B cell (primary cell): ENCODE measurements at regions of chrX and their contacts with region 1.

Region 1: DNA sequence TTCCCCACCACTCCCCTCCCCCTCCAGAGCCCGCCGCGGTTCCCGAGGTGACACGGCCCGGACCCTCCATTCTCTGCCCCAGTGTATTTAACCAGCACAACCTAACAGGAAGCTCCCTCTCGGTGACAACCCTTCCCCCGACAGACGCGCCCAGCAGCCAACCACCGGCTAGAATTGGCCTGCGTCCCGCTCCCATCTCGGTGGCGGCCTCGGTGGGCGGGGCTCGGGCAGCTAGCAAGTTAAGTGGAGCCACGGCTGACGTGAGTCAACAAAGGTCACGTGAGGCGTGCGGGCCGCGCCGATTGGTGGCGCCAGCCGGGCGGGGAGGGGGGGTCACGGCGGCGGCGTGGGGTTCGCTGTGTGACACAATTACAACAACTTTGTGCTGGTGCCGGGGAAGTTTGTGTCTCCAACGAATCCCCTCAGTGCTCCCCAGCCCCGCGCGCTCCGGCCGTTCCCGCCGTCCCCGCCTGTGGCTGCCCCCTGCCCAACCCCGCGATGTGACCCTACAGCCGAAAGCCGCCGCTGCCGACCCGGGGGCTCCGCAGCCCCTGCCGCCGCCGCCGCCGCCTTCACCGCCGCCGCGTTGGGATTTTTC is at the start of gene KDM6A:
- DNase-seq: peak; percentile 96
- ATAC-seq: peak; percentile 88
- H3K4me3 ChIP-seq: peak within 1 kb of the TSS; percentile 74 to 90 (median 86)
- H3K4me3 Mint-ChIP-seq: peak within 1 kb of the TSS; percentile 95
- H3K27ac ChIP-seq: peak within 1 kb of the TSS; percentile 90 to 100
- H3K27ac Mint-ChIP-seq: peak within 1 kb of the TSS; percentile 96
- H3K4me1 ChIP-seq: peaks cover 9 to 27% of the 10 kb centered on the region in 2 donors
- H3K4me1 Mint-ChIP-seq: peaks cover 18% of the 10 kb centered on the region
- H3K27me3 ChIP-seq: no peaks in the 10 kb centered on the region
- H3K27me3 Mint-ChIP-seq: no peaks in the 10 kb centered on the region
- CTCF ChIP-seq: no peak
- total RNA-seq, gene KDM6A: 57.0 and 57.3 TPM in 2 replicates

Region 2: GRCh38 chrX:44542567-44543325 is 330.2 kb before region 1 on chrX and contains the start of gene FUNDC1:
- CTCF ChIA-PET with region 1: no interaction called
- POLR2A ChIA-PET with region 1: no interaction called
- intact Hi-C with region 1: loop called (anchors 5 kb)
- DNase-seq: peak; percentile 90
- ATAC-seq: peak; percentile 94
- H3K4me3 ChIP-seq: peak within 1 kb of the TSS; percentile 48 to 94 (median 85)
- H3K4me3 Mint-ChIP-seq: peak within 1 kb of the TSS; percentile 97
- H3K27ac ChIP-seq: peak within 1 kb of the TSS; percentile 72 to 85
- H3K27ac Mint-ChIP-seq: peak within 1 kb of the TSS; percentile 97
- H3K4me1 ChIP-seq: peaks cover 11 to 13% of the 10 kb centered on the region in 2 donors
- H3K4me1 Mint-ChIP-seq: peaks cover 18% of the 10 kb centered on the region
- H3K27me3 ChIP-seq: no peaks in the 10 kb centered on the region
- H3K27me3 Mint-ChIP-seq: no peaks in the 10 kb centered on the region
- CTCF ChIP-seq: peak; percentile 36
- total RNA-seq, gene FUNDC1: 5.7 and 6.4 TPM in 2 replicates

Region 3: DNA sequence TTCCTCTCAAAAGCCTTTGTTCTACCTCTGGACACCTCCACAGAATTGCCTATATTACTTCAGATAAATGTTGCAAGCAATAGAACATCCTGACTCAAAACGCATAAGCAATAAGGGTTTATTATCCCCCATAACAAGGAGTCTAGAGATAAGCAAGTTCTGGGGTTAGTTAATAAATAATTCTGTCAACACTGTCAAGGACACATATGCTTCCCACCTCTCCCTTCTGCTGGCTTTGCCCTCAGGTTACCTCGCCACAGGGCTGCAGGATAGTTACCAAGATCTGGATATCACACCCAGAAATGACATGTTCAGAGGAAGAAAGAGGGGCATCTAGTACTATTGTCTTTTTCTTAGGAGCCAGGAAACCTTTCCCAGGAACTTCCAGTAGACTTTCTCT is 43.1 kb before region 1 on chrX:
- CTCF ChIA-PET with region 1: no interaction called
- POLR2A ChIA-PET with region 1: no interaction called
- intact Hi-C with region 1: no loop called
- DNase-seq: no peak
- ATAC-seq: no peak
- H3K4me3 ChIP-seq: no peak overlapping the region
- H3K4me3 Mint-ChIP-seq: no peak overlapping the region
- H3K27ac ChIP-seq: no peak overlapping the region
- H3K27ac Mint-ChIP-seq: no peak overlapping the region
- H3K4me1 ChIP-seq: no peaks in the 10 kb centered on the region
- H3K4me1 Mint-ChIP-seq: no peaks in the 10 kb centered on the region
- H3K27me3 ChIP-seq: no peaks in the 10 kb centered on the region
- H3K27me3 Mint-ChIP-seq: no peaks in the 10 kb centered on the region
- CTCF ChIP-seq: no peak

Region 4: GRCh38 chrX:44904542-44905115 is 31.7 kb after region 1 on chrX:
- CTCF ChIA-PET with region 1: interaction called, 3 read pairs
- POLR2A ChIA-PET with region 1: interaction called, 5 read pairs
- intact Hi-C with region 1: loop called (anchors 5 kb)
- DNase-seq: no peak
- ATAC-seq: no peak
- H3K4me3 ChIP-seq: peak overlapping the region in 1 of 5 experiments; percentile 29
- H3K4me3 Mint-ChIP-seq: peak overlapping the region; percentile 47
- H3K27ac ChIP-seq: peak overlapping the region; percentile 38 to 43
- H3K27ac Mint-ChIP-seq: no peak overlapping the region
- H3K4me1 ChIP-seq: peaks cover 42 to 72% of the 10 kb centered on the region in 2 donors
- H3K4me1 Mint-ChIP-seq: peaks cover 65% of the 10 kb centered on the region
- H3K27me3 ChIP-seq: no peaks in the 10 kb centered on the region
- H3K27me3 Mint-ChIP-seq: no peaks in the 10 kb centered on the region
- CTCF ChIP-seq: no peak

Region 5: DNA sequence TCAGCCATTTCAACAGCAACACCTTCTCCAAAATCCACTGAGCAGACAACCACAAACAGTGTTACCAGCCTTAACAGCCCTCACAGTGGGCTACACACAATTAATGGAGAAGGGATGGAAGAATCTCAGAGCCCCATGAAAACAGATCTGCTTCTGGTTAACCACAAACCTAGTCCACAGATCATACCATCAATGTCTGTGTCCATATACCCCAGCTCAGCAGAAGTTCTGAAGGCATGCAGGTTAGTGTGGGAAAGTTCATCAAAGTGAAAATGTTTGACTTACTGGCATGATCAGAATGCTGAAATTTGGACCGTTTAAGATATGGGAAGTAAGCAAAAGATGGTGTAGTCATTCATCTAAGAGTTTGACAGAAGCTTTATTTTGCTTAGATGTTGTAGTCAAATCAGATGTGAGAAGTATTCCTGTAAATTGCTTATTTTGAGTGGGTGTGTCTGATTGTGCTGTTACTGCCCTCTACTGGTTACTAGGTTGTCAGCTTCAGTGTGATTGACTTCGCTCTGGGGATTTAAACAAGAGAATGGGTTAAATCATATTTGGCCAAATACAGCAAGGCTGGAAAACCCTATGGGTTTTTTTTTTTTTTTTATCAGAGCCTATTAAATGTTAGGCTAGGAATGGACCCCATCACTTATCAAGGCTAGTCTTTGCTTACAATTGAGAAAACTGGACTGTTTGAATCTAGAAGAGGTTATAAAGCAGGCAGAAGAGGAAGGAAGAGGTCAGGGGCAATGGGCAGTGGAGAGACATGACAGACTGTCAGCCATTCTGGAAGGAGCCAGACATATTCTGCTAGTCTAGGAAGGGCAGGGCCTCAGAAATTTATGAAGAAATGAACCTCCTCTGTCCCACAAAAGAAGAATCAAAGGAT is 197.4 kb after region 1 on chrX:
- CTCF ChIA-PET with region 1: interaction called, 4 read pairs
- POLR2A ChIA-PET with region 1: interaction called, 3 read pairs
- intact Hi-C with region 1: loop called (anchors 5 kb)
- DNase-seq: peak; percentile 51
- ATAC-seq: peak; percentile 43
- H3K4me3 ChIP-seq: no peak overlapping the region
- H3K4me3 Mint-ChIP-seq: no peak overlapping the region
- H3K27ac ChIP-seq: peak overlapping the region in 1 of 2 donors; percentile 44
- H3K27ac Mint-ChIP-seq: peak overlapping the region; percentile 56
- H3K4me1 ChIP-seq: peaks cover 16 to 28% of the 10 kb centered on the region in 2 donors
- H3K4me1 Mint-ChIP-seq: peaks cover 37% of the 10 kb centered on the region
- H3K27me3 ChIP-seq: no peaks in the 10 kb centered on the region
- H3K27me3 Mint-ChIP-seq: no peaks in the 10 kb centered on the region
- CTCF ChIP-seq: peak; percentile 58

Region 6: DNA sequence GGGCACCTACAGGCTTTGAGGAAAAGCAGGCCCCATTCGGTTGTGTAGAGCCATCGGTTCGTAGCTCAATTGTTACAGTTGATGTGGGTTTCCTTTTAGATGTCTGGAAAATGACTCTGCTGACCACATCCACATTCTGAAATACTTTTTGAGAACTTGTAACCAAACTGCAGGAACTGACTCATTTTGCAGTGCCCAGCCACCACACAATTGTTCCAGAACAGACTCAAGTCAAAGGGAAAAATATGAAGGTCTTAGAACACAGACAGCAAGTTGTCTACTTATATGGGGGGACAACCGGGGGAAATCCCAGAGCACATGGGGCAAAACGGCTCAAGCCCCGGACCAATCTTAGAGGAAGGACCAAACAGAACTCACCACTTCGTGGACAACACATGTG is 885.4 kb after region 1 on chrX:
- CTCF ChIA-PET with region 1: no interaction called
- POLR2A ChIA-PET with region 1: no interaction called
- intact Hi-C with region 1: loop called (anchors 5 kb)
- DNase-seq: peak; percentile 30
- ATAC-seq: no peak
- H3K4me3 ChIP-seq: peak overlapping the region; percentile 11 to 40 (median 27)
- H3K4me3 Mint-ChIP-seq: peak overlapping the region; percentile 86
- H3K27ac ChIP-seq: peak overlapping the region; percentile 67 to 68
- H3K27ac Mint-ChIP-seq: peak overlapping the region; percentile 90
- H3K4me1 ChIP-seq: peaks cover 85 to 90% of the 10 kb centered on the region in 2 donors
- H3K4me1 Mint-ChIP-seq: peaks cover 70% of the 10 kb centered on the region
- H3K27me3 ChIP-seq: no peaks in the 10 kb centered on the region
- H3K27me3 Mint-ChIP-seq: no peaks in the 10 kb centered on the region
- CTCF ChIP-seq: no peak

Region 7: GRCh38 chrX:45794323-45794994 is 921.5 kb after region 1 on chrX:
- CTCF ChIA-PET with region 1: no interaction called
- POLR2A ChIA-PET with region 1: no interaction called
- intact Hi-C with region 1: no loop called
- DNase-seq: no peak
- ATAC-seq: no peak
- H3K4me3 ChIP-seq: no peak overlapping the region
- H3K4me3 Mint-ChIP-seq: no peak overlapping the region
- H3K27ac ChIP-seq: no peak overlapping the region
- H3K27ac Mint-ChIP-seq: no peak overlapping the region
- H3K4me1 ChIP-seq: no peaks in the 10 kb centered on the region
- H3K4me1 Mint-ChIP-seq: peaks cover 9% of the 10 kb centered on the region
- H3K27me3 ChIP-seq: no peaks in the 10 kb centered on the region
- H3K27me3 Mint-ChIP-seq: no peaks in the 10 kb centered on the region
- CTCF ChIP-seq: no peak